ENCODE measurements at regions of chr12 and their contacts with region 1.

Region 1: DNA sequence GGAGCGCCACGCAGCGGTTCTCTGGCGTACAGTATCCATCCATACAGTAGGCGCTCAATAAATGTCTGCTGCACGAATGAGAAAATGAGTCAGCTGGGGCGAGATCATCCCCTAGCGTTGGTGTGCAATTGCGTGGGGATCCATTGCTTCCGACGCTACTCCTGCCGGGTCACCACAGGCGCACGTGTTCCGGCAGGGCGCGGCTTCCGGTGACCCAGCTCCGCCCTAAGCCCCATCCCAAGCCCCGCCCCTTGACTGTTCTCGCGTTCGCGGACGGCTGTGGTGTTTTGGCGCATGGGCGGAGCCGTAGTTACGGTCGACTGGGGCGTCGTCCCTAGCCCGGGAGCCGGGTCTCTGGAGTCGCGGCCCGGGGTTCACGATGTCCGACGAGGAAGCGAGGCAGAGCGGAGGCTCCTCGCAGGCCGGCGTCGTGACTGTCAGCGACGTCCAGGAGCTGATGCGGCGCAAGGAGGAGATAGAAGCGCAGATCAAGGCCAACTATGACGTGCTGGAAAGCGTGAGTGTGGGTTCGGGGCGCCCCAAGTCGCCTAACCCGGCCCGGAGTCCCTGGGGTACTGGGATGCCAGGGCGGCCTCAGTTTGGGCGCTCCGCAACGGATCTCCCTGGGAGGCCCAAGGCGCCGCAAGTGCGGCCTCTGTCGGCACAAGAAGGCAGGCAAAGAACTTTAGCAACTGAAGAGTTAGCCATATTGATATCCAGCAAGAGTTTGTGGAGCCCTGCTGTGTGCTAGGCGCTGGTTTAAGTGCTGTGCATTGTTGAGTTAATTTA is at the start of gene PSMD9:
- H3K4me3 Mint-ChIP-seq: peak within 1 kb of the TSS; percentile 100
- H3K27ac Mint-ChIP-seq: peak within 1 kb of the TSS; percentile 98
- H3K4me1 Mint-ChIP-seq: peaks cover 23% of the 10 kb centered on the region
- H3K27me3 Mint-ChIP-seq: no peaks in the 10 kb centered on the region

Region 2: GRCh38 chr12:121494093-121494787 is 394.4 kb before region 1 on chr12:
- intact Hi-C with region 1: no loop called
- H3K4me3 Mint-ChIP-seq: no peak overlapping the region
- H3K27ac Mint-ChIP-seq: no peak overlapping the region
- H3K4me1 Mint-ChIP-seq: peaks cover 37% of the 10 kb centered on the region
- H3K27me3 Mint-ChIP-seq: no peaks in the 10 kb centered on the region

Region 3: DNA sequence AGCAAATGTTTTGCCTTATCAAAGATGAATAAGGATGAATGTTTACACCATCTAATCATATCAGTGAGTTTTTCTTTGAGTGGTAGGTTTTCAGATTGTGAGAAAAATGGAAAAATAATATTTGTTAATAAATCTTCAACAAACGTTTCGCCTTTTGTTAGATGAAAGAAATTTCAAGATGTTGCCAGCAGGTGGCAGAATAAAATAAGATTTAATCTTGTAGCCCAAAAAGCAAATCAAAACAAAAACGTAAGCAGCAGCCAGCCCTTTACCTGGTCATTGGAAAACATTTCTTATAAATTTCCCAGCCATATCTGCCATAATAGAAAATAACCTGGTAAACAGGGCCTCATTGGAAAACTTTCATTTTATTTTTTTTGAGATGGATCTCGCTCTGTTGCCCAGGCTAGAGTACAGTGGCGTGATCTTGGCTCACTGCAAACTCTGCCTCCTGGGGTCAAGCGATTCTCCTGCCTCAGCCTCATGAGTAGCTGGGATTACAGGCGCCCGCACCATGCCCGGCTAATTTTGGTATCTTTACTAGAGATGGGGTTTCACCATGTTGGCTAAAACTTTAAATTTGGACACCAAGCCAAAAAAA is 191.5 kb before region 1 on chr12:
- intact Hi-C with region 1: loop called (anchors 5 kb)
- H3K4me3 Mint-ChIP-seq: no peak overlapping the region
- H3K27ac Mint-ChIP-seq: no peak overlapping the region
- H3K4me1 Mint-ChIP-seq: no peaks in the 10 kb centered on the region
- H3K27me3 Mint-ChIP-seq: no peaks in the 10 kb centered on the region

Region 4: DNA sequence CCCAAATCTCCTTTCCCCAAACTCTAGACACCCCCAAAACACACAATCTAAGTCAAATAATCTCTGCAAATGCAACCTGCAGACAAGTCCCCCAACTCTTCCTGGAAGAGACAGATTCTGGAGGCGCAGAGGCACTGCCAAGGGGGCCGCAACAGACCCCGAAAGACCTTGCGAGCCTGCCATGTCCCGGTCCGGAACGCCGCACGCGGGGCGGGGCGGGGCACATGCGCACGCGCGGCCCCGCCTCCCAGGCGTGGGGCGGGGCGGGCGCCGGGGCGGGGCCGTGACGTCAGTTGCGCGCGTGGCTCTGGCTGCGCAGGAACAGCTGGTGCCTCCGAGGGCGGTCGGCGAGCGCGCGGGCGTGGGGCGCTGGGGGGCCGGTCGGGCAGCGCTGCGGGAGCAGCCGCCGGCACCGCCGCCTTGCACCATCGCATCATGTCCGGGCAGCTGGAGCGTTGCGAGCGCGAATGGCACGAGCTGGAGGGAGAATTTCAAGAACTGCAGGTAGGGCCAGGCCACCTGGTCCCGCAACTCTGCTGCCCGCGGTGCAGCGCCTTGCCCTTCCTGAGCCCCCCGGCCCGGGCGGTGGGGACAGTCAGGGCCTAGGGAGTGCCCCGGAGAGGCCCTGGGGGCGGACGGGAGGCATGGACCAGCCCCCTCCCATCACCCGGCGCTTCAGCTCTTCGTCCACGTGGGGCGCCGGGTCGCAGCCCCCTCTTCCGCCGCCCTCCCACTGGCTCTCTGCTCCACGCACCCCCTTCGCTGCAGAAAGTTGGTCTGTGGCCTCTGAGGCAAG is 176.0 kb before region 1 on chr12 and contains the start of gene TMEM120B:
- intact Hi-C with region 1: loop called (anchors 5 kb)
- H3K4me3 Mint-ChIP-seq: peak within 1 kb of the TSS; percentile 93
- H3K27ac Mint-ChIP-seq: peak within 1 kb of the TSS; percentile 93
- H3K4me1 Mint-ChIP-seq: peaks cover 20% of the 10 kb centered on the region
- H3K27me3 Mint-ChIP-seq: peaks cover 1% of the 10 kb centered on the region

Region 5: DNA sequence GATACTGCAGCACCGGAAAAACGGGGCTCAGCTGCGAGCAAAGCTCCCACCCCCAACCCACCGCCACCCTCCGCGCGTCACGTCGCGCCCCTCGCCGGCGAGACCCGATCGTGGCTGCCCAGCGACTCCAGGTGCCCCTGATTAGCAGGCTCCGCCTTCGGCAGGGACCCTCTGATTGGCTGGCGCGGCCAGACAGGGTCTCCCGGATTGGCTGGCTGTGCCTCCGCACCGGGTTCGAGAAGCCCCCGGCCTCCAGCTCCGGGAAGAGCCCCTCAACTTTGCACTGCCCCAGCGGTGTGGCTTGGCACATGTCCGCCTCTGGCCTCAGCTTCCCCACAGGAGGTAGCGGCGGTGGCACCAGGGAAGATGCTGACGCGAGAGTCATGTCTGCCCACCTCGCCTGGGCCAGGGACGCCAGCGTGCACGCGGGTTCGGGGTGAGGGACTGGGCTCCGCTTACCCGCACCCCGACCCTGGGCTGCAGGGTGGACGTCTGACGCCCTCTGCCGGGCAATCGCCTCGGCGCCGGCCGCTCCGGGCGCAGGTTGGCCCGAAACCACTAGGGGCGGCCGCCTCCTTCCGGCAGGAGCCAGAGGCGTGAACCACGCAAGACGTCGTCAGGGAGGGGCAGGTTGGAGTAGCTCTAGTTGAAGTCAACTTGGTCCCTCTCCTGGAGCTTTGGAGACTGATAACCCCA is 94.7 kb before region 1 on chr12:
- intact Hi-C with region 1: loop called (anchors 2 kb)
- H3K4me3 Mint-ChIP-seq: peak overlapping the region; percentile 78
- H3K27ac Mint-ChIP-seq: peak overlapping the region; percentile 89
- H3K4me1 Mint-ChIP-seq: peaks cover 84% of the 10 kb centered on the region
- H3K27me3 Mint-ChIP-seq: no peaks in the 10 kb centered on the region

Region 6: DNA sequence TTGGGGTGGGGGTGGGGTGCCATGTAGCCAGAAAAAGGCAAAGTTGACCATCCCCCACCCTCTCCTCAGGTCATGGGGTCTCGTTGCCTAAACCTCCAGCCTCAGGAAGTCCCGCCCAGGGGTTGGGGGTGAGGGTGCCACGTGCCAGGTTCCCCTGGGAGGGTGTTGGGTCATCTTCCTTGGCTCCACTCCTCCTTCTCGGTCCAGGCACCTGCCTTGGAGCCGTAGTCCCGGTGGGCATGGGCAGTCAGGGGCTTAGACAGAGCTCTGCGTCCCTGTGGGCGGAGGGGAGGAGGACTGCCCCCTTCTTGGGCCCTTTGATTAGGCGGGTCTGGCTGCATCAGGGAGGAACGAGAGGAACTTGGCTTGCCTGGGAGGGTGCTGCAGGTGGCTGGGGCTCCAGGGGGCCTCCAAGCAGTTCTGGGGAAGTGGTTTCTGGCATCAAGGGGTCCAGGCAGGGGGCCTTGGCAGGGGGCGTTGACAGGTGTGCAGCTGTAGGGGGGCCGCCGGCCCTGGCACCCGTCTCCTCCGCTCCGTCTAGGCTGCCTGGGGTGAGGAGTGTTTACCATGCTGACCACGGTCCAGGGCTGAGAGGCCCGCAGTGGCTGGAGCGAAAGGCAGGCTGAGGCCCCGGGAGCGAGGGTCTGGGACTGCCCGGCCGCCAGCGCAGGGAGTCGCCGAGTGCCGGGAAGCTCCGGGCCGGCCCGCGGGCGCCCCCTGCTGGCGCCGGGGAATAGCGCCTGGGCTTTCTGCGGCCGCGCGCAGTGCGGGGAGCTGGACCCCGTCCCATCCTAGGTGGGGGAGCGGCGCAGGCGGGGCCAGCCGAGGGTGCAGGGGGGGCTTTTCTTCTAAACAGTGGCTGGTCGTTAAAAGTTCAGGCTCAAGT is 77.0 kb before region 1 on chr12:
- intact Hi-C with region 1: loop called (anchors 5 kb)
- H3K4me3 Mint-ChIP-seq: peak overlapping the region; percentile 82
- H3K27ac Mint-ChIP-seq: peak overlapping the region; percentile 76
- H3K4me1 Mint-ChIP-seq: peaks cover 69% of the 10 kb centered on the region
- H3K27me3 Mint-ChIP-seq: no peaks in the 10 kb centered on the region

Region 7: DNA sequence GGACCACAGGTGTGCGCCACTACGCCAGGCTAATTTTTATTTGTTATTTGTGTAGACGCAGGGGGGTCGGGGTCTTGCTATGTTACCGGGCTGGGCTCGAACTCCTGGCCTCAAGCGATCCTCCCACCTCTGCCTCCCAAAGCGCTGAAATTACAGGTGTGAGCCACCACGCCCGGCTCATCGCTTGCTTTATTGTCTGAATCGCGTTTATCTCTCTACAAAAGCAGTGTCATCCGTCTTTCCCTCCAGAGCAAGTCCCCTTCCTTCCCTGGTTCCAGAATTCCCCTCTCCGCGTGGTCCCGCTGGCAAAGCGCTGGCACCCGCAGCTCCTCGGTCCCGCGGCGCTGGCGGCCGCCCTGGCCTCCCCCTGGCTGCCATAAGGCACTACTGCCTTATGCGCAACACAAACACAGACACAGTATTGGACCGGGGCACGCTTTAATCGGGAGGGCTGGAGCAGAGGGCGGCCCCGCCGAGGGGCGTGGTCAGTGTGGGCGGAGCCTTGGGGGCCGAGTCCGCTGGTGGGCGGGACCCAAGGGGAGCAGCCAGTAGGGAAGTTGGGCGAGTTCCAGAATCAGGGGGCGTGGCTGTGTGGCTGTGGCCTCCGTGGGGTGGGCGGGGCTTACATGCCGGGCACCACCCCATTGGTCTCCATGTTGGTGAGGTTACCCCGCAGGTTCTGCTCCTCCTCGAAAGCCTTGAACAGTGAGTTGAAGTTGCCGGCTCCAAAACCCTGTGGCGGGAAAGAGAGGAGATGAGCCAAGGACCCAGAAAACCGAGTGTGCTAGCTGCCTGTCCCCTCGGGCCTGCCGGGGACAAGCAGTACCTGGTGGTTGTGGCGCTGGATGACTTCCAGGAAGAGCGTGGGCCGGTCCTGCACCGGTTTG is 49.3 kb before region 1 on chr12:
- intact Hi-C with region 1: loop called (anchors 1 kb)
- H3K4me3 Mint-ChIP-seq: peak overlapping the region; percentile 98
- H3K27ac Mint-ChIP-seq: peak overlapping the region; percentile 94
- H3K4me1 Mint-ChIP-seq: peaks cover 23% of the 10 kb centered on the region
- H3K27me3 Mint-ChIP-seq: peaks cover 8% of the 10 kb centered on the region

Region 8: DNA sequence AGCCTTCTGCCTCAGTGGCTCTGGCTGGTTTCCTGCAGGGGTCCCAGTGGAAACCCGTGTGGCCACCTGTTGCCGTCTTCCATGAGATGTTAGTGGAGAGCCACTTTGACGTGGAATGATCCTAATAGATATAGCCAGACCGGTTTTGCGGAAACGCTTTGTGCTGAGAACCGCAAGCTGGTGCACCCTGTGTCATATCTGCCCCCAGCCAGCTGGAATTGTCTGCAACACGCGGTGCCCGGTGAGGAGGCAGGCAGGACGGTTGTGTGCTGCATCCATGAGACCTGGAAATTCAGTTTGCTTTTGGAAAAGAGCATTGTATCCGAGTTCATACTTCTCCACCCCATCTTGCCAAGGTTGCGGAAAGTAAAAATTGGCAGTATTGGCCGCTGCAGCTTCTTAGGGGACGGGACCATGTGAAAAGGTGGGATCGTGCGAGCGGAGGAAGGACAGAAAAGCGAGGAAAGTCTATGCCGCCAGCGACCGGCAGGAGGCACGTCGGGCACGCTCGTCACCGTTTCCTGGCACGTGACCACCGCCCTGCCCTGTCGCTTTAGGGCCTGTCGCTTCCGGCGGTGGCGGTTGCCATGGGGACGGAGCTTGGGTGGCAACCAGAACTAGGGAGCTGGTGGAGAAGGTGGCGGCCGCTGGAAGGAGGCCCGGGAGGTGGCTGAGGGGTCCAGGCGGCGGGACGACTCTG is 29.5 kb after region 1 on chr12 and contains the start of gene CFAP251:
- intact Hi-C with region 1: loop called (anchors 1 kb)
- H3K4me3 Mint-ChIP-seq: peak within 1 kb of the TSS; percentile 76
- H3K27ac Mint-ChIP-seq: peak within 1 kb of the TSS; percentile 78
- H3K4me1 Mint-ChIP-seq: peaks cover 33% of the 10 kb centered on the region
- H3K27me3 Mint-ChIP-seq: no peaks in the 10 kb centered on the region

Measured in dendritic cell treated with granulocyte-macrophage colony-stimulating factor and Interleukin-4, amounts not matched to agents 40 ng/mL and 50 ng/mL, for 4 days (primary cell).